Heart right ventricle (tissue), 16 donors: ENCODE measurements at regions of chr21 and their contacts with region 1.

Region 1: GRCh38 chr21:15483138-15483780 is 246.5 kb upstream of the USP25 start:
- DNase-seq: peak; percentile 81 to 89
- ATAC-seq: peak; percentile 93 to 100 (median 98)
- H3K4me3 ChIP-seq: no peak overlapping the region
- H3K27ac ChIP-seq: no peak overlapping the region
- H3K4me1 ChIP-seq: no peaks in the 10 kb centered on the region
- H3K27me3 ChIP-seq: no peaks in the 10 kb centered on the region
- CTCF ChIP-seq: peak; percentile 84 to 97 (median 93)

Region 2: GRCh38 chr21:14259747-14260146 is 1223.5 kb before region 1 on chr21:
- intact Hi-C with region 1: loop called in 4 of 10 experiments (anchors 2 to 10 kb)
- DNase-seq: no peak
- ATAC-seq: peak in 3 of 8 donors; percentile 57 to 63 (median 61)
- H3K4me3 ChIP-seq: no peak overlapping the region
- H3K27ac ChIP-seq: no peak overlapping the region
- H3K4me1 ChIP-seq: no peaks in the 10 kb centered on the region
- H3K27me3 ChIP-seq: peaks cover 0 to 7% (median 0%) of the 10 kb centered on the region in 7 donors
- CTCF ChIP-seq: peak in 8 of 9 donors; percentile 27 to 69 (median 59)

Region 3: GRCh38 chr21:14403681-14404318 is 1079.5 kb before region 1 on chr21:
- intact Hi-C with region 1: loop called in 2 of 10 experiments (anchors 5 to 10 kb)
- DNase-seq: no peak
- ATAC-seq: no peak
- H3K4me3 ChIP-seq: no peak overlapping the region
- H3K27ac ChIP-seq: no peak overlapping the region
- H3K4me1 ChIP-seq: no peaks in the 10 kb centered on the region
- H3K27me3 ChIP-seq: no peaks in the 10 kb centered on the region
- CTCF ChIP-seq: peak in 8 of 9 donors; percentile 14 to 72 (median 58)

Region 4: DNA sequence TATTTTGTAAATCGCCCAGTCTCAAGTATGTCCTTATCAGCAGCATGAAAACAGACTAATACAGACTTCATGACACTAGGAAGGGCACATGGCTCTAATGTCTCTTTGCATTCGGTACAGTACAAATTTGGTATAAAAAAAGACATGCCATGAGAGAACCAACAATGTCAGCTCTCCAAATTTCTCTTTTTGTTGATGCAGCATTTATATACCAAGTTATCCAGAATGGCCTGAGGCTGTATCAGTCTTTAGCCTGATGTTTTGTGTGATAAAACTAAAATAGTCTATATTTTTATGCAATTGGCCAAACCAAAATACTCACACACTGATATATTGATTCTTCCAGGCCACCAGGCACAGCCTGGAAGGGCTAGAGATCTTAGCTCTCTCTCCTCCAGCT is 812.9 kb before region 1 on chr21:
- intact Hi-C with region 1: no loop called
- DNase-seq: no peak
- ATAC-seq: no peak
- H3K4me3 ChIP-seq: no peak overlapping the region
- H3K27ac ChIP-seq: no peak overlapping the region
- H3K4me1 ChIP-seq: peaks cover 0 to 3% (median 0%) of the 10 kb centered on the region in 9 donors
- H3K27me3 ChIP-seq: no peaks in the 10 kb centered on the region
- CTCF ChIP-seq: no peak

Region 5: GRCh38 chr21:15241997-15242736 is 241.1 kb before region 1 on chr21:
- intact Hi-C with region 1: loop called in 1 of 10 experiments (anchors 10 kb)
- DNase-seq: no peak
- ATAC-seq: no peak
- H3K4me3 ChIP-seq: no peak overlapping the region
- H3K27ac ChIP-seq: no peak overlapping the region
- H3K4me1 ChIP-seq: no peaks in the 10 kb centered on the region
- H3K27me3 ChIP-seq: no peaks in the 10 kb centered on the region
- CTCF ChIP-seq: no peak

Region 6: GRCh38 chr21:15379776-15380175 is 103.5 kb before region 1 on chr21:
- intact Hi-C with region 1: no loop called
- DNase-seq: no peak
- ATAC-seq: no peak
- H3K4me3 ChIP-seq: no peak overlapping the region
- H3K27ac ChIP-seq: no peak overlapping the region
- H3K4me1 ChIP-seq: peaks cover 0 to 6% (median 0%) of the 10 kb centered on the region in 9 donors
- H3K27me3 ChIP-seq: no peaks in the 10 kb centered on the region
- CTCF ChIP-seq: no peak

Region 7: DNA sequence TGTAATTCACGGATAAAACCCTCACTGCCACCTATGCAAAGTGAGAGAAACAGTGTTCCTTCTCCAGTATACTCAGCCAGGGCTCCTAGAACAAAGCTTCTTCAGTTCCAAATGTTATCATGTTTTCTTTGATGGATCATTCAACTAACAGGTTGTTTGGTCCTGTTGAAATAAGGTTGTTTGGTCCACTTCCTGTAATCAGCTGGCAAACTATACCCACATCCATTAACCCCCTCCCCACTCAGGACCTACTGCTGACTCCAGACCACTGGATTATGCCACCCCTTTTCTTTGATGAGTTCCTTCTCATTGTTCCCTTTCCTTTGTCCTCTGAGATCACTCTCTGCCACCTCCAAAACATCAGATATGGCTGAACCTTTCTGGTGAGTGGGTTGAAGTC is 21.2 kb before region 1 on chr21:
- intact Hi-C with region 1: no loop called
- DNase-seq: no peak
- ATAC-seq: no peak
- H3K4me3 ChIP-seq: no peak overlapping the region
- H3K27ac ChIP-seq: no peak overlapping the region
- H3K4me1 ChIP-seq: no peaks in the 10 kb centered on the region
- H3K27me3 ChIP-seq: no peaks in the 10 kb centered on the region
- CTCF ChIP-seq: no peak